Endothelial cell of umbilical vein (primary cell): ENCODE measurements at regions of chr19 and their contacts with region 1.

Region 1: GRCh38 chr19:37779127-37780005 is at the start of gene ZNF573:
- DNase-seq: peak; percentile 92
- H3K4me3 ChIP-seq: peak within 1 kb of the TSS; percentile 44 to 76 (median 52)
- H3K27ac ChIP-seq: peak within 1 kb of the TSS; percentile 18
- H3K4me1 ChIP-seq: peaks cover 2% of the 10 kb centered on the region
- H3K27me3 ChIP-seq: no peaks in the 10 kb centered on the region
- CTCF ChIP-seq: peak in 1 of 2 donors; percentile 32
- POLR2A ChIP-seq: peak; percentile 78
- total RNA-seq, gene ZNF573: 6.3 and 7.5 TPM in 2 replicates

Region 2: DNA sequence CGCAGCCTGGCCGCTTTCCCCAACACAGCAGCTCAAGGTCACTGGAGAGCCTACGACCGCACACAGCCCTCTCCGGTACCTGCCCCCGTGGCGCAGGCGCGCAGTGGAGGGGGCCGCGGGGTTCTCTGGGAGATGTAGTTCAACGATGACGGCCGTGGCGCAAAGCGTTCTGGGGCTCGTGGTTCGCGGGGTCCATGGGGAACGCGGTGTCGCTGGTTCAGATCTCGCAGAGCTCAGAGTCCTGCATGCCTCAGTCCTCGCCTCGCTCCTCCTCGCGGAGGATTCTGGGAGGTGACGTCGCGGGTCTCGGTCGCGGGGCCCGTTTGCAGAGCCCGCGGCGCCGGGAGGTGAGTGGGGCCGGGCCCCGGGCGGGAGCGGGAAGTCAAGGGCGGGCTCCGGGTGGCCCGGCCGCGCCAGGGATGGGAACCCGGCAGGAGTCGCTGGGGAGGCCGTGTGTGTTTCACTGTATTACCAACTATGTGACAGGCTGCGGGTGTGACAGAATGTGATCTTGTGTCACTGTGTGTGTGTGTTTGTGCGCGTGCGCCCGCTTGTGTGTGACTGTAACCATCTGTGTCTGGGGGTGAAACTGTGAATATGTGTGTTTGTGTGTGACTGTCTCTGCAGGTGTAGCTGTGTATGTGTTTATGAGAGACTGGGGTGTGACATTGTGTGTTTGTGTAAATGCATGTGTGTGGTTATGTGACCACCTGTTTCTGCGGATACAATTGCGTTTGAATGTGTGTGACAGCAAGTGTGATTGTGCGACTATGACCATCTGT is 408.3 kb before region 1 on chr19 and contains the start of gene ZNF527:
- CTCF ChIA-PET with region 1: no interaction called
- POLR2A ChIA-PET with region 1: no interaction called
- dilution Hi-C with region 1: no loop called
- intact Hi-C with region 1: loop called (anchors 1 kb)
- DNase-seq: peak; percentile 98
- H3K4me3 ChIP-seq: peak within 1 kb of the TSS; percentile 13 to 89 (median 72)
- H3K27ac ChIP-seq: peak within 1 kb of the TSS; percentile 14
- H3K4me1 ChIP-seq: no peaks in the 10 kb centered on the region
- H3K27me3 ChIP-seq: no peaks in the 10 kb centered on the region
- CTCF ChIP-seq: no peak
- POLR2A ChIP-seq: peak; percentile 74
- total RNA-seq, gene ZNF527: 3.4 and 3.6 TPM in 2 replicates

Region 3: GRCh38 chr19:37719111-37719926 is 60.0 kb before region 1 on chr19 and contains the start of gene ZNF607:
- CTCF ChIA-PET with region 1: interaction called, 3 read pairs
- POLR2A ChIA-PET with region 1: no interaction called
- dilution Hi-C with region 1: no loop called
- intact Hi-C with region 1: loop called (anchors 2 kb)
- DNase-seq: peak; percentile 91
- H3K4me3 ChIP-seq: peak within 1 kb of the TSS; percentile 68 to 92 (median 74)
- H3K27ac ChIP-seq: no peak within 1 kb of the TSS
- H3K4me1 ChIP-seq: peaks cover 7% of the 10 kb centered on the region
- H3K27me3 ChIP-seq: no peaks in the 10 kb centered on the region
- CTCF ChIP-seq: peak; percentile 48 to 72
- POLR2A ChIP-seq: peak; percentile 58
- total RNA-seq, gene ZNF607: 4.5 and 5.2 TPM in 2 replicates

Region 4: GRCh38 chr19:37914908-37915307 is 135.5 kb after region 1 on chr19:
- CTCF ChIA-PET with region 1: no interaction called
- POLR2A ChIA-PET with region 1: no interaction called
- dilution Hi-C with region 1: no loop called
- intact Hi-C with region 1: no loop called
- DNase-seq: no peak
- H3K4me3 ChIP-seq: no peak overlapping the region
- H3K27ac ChIP-seq: no peak overlapping the region
- H3K4me1 ChIP-seq: peaks cover 3% of the 10 kb centered on the region
- H3K27me3 ChIP-seq: no peaks in the 10 kb centered on the region
- CTCF ChIP-seq: no peak
- POLR2A ChIP-seq: no peak